ENCODE measurements at regions of chr14 and their contacts with region 1.

Region 1: GRCh38 chr14:39383026-39383660 is 49.1 kb downstream of the FBXO33 start:
- DNase-seq: no peak
- ATAC-seq: no peak
- H3K4me3 ChIP-seq: no peak overlapping the region
- H3K27ac ChIP-seq: no peak overlapping the region
- H3K4me1 ChIP-seq: no peaks in the 10 kb centered on the region; a peak in 1 of 5 replicates
- H3K27me3 ChIP-seq: no peaks in the 10 kb centered on the region
- CTCF ChIP-seq: no peak
- EP300 ChIP-seq: no peak
- POLR2A ChIP-seq: no peak
- RAD21 ChIP-seq: no peak

Region 2: DNA sequence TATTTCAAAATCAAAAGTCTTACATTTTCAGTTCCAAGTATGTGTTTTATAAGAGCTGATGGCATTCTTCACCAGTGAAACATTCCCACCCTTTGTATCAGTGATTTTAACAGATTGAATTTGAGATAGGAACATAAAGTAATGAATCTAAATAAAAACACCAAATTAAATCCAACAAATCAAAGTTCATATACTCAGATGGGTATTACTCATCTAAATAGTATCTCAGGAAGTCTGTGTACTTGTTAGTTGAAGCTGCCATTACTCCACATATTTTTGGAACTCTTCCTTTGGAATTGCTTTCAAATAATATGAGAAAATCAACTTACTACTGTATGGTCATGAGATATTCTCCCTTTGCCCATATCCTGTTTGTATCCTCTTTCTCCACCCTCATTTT is 60.3 kb before region 1 on chr14:
- CTCF ChIA-PET with region 1: no interaction called
- POLR2A ChIA-PET with region 1: no interaction called
- in situ Hi-C with region 1: no loop called
- intact Hi-C with region 1: no loop called
- DNase-seq: no peak
- ATAC-seq: no peak
- H3K4me3 ChIP-seq: no peak overlapping the region
- H3K27ac ChIP-seq: no peak overlapping the region
- H3K4me1 ChIP-seq: no peaks in the 10 kb centered on the region
- H3K27me3 ChIP-seq: no peaks in the 10 kb centered on the region
- CTCF ChIP-seq: no peak
- EP300 ChIP-seq: no peak
- POLR2A ChIP-seq: no peak
- RAD21 ChIP-seq: no peak

Region 3: GRCh38 chr14:39351708-39352107 is 31.4 kb before region 1 on chr14:
- CTCF ChIA-PET with region 1: no interaction called
- POLR2A ChIA-PET with region 1: no interaction called
- in situ Hi-C with region 1: no loop called
- intact Hi-C with region 1: no loop called
- DNase-seq: no peak
- ATAC-seq: no peak
- H3K4me3 ChIP-seq: no peak overlapping the region
- H3K27ac ChIP-seq: no peak overlapping the region
- H3K4me1 ChIP-seq: no peaks in the 10 kb centered on the region
- H3K27me3 ChIP-seq: no peaks in the 10 kb centered on the region
- CTCF ChIP-seq: no peak
- EP300 ChIP-seq: no peak
- POLR2A ChIP-seq: no peak
- RAD21 ChIP-seq: no peak

Region 4: GRCh38 chr14:39393274-39393673 is 10.1 kb after region 1 on chr14:
- CTCF ChIA-PET with region 1: no interaction called
- POLR2A ChIA-PET with region 1: no interaction called
- in situ Hi-C with region 1: no loop called
- intact Hi-C with region 1: loop called (anchors 1 kb)
- DNase-seq: no peak
- ATAC-seq: no peak
- H3K4me3 ChIP-seq: no peak overlapping the region
- H3K27ac ChIP-seq: no peak overlapping the region
- H3K4me1 ChIP-seq: no peaks in the 10 kb centered on the region
- H3K27me3 ChIP-seq: no peaks in the 10 kb centered on the region
- CTCF ChIP-seq: no peak
- EP300 ChIP-seq: no peak
- POLR2A ChIP-seq: no peak
- RAD21 ChIP-seq: no peak

Region 5: DNA sequence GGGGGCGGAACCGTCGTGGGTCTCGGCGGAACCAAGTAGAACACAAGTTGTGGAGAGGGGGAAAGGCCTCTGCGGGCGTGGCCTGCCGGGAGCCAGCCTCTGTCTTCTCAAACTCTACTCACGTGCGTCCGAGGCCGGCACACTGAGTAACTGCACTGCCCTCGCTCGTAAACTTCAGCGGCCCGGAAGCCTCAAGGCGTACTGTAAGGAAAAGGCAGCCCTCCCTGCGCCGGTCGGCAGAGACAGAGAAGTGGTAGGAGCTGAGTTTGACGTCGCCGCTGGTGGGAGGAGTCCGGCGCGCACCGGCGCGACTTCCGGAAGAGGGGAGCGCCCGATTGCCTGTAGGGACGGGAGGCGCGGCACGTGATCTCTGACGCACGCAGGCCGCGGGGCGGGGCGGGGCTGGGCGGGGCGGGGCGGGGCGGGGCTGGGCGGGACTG is 49.1 kb after region 1 on chr14 and contains the start of gene FBXO33:
- CTCF ChIA-PET with region 1: no interaction called
- POLR2A ChIA-PET with region 1: no interaction called
- in situ Hi-C with region 1: no loop called
- intact Hi-C with region 1: loop called (anchors 5 kb)
- DNase-seq: peak; percentile 85 to 94 (median 88)
- ATAC-seq: peak; percentile 90
- H3K4me3 ChIP-seq: peak within 1 kb of the TSS; percentile 92
- H3K27ac ChIP-seq: peak within 1 kb of the TSS; percentile 100
- H3K4me1 ChIP-seq: peaks cover 2 to 16% of the 10 kb centered on the region in 2 experiments; a peak in 4 of 5 replicates
- H3K27me3 ChIP-seq: no peaks in the 10 kb centered on the region
- CTCF ChIP-seq: no peak
- EP300 ChIP-seq: no peak
- POLR2A ChIP-seq: no peak
- RAD21 ChIP-seq: no peak
- polyA plus RNA-seq, gene FBXO33: 1.6 to 2.7 TPM

Measured in K562 (cell line).